Activated CD8-positive, alpha-beta T cell treated with anti-CD3 and anti-CD28 coated beads for 36 hours (primary cell): ENCODE measurements at regions of chr1 and their contacts with region 1.

Region 1: DNA sequence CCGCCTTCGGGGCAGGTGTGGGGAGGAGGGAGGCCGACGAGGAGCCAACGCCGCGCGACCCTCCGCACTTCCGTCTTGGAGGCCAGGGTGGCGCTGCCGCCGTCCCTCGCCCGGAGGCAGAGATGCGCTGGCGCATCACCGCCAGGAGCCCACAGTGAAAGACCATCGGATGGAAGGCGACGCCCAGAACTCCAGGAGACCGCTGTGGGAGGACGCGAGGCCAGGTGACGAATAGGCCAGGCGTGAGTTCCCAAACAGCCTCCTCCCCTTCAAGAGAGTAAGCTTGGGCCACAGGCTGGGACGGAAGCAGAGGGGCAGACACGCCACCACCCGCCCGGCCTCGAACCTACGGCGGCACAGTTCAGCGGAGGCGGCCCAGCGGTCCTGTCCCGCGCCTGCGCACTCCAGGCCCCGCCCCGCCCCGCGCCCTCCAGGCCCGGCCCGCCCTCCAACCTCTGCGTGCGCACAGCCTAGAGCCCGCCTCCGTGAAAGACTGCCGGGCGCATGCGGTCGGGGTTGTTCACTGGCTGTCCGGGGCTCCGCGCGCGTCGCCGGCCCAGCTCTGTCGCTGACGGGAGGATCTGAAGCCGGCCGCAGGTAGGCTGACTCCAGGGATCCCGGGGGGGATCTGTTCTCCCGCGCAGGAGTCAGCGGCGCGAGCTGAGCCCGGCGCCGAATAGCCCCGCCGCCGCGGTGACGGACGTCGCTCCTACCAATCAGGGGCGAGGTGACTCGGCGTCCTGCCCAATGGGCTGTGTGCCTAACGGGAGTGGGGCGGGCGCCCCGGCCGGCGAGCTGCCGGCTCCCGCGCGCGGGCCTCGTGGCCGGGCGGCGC is at the start of gene CTPS1:
- DNase-seq: peak; percentile 96
- ATAC-seq: peak; percentile 88
- H3K4me3 Mint-ChIP-seq: peak within 1 kb of the TSS; percentile 91
- H3K27ac Mint-ChIP-seq: peak within 1 kb of the TSS; percentile 95
- H3K4me1 Mint-ChIP-seq: peaks cover 47% of the 10 kb centered on the region
- H3K27me3 Mint-ChIP-seq: no peaks in the 10 kb centered on the region
- CTCF ChIP-seq: peak; percentile 50
- total RNA-seq, gene CTPS1: 100 to 102 TPM

Region 2: DNA sequence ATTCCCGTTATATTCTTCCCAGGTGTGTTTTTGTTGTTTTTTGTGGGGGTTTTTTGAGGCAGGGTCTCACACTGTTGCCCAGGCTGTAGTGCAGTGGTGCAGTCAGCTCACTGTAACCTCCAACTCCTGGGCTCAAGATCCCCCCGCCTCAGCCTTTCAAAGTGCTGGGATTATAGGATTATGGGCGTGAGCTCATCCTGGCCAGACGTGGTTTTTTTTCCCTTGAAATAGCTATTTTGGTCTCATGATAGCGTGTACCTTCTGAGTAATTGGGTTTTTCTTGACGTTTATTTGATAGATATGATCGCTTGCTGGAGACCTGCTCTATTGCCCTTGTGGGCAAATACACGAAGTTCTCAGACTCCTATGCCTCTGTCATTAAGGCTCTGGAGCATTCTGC is 17.6 kb after region 1 on chr1:
- CTCF ChIA-PET with region 1: interaction called, 8 read pairs
- POLR2A ChIA-PET with region 1: interaction called, 67 read pairs
- intact Hi-C with region 1: no loop called
- DNase-seq: no peak
- ATAC-seq: no peak
- H3K4me3 Mint-ChIP-seq: no peak overlapping the region
- H3K27ac Mint-ChIP-seq: no peak overlapping the region
- H3K4me1 Mint-ChIP-seq: peaks cover 8% of the 10 kb centered on the region
- H3K27me3 Mint-ChIP-seq: no peaks in the 10 kb centered on the region
- CTCF ChIP-seq: no peak

Region 3: DNA sequence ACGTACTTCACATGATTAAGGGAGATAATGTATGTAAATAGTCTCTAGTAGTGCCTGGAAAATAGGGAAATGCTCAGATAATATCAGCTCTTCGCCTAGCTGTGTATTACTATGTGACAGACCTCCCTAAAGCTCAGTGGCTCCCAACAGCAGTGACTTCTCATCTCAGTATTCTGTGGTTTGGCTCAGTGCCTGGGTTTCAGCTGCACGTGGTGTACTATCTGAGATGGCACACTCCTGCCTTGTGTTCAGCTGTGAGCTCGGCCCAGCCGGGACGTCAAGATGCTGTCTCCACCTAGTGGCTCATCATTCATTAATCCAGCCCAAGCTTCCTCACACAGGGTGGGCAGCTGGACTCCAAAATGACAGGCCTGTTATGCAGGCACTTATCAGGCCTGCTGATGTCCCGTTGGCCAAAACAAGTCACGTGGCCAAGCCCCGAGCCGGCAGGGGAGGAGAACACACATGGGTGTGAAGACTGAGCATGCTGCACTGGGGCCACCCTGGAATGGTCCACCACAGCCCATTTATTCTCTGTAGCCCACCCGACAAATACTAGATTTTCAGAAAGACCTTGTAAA is 24.3 kb after region 1 on chr1:
- CTCF ChIA-PET with region 1: interaction called, 12 read pairs
- POLR2A ChIA-PET with region 1: interaction called, 67 read pairs
- intact Hi-C with region 1: no loop called
- DNase-seq: peak; percentile 98
- ATAC-seq: peak; percentile 96
- H3K4me3 Mint-ChIP-seq: no peak overlapping the region
- H3K27ac Mint-ChIP-seq: peak overlapping the region; percentile 37
- H3K4me1 Mint-ChIP-seq: peaks cover 27% of the 10 kb centered on the region
- H3K27me3 Mint-ChIP-seq: no peaks in the 10 kb centered on the region
- CTCF ChIP-seq: peak; percentile 46

Region 4: DNA sequence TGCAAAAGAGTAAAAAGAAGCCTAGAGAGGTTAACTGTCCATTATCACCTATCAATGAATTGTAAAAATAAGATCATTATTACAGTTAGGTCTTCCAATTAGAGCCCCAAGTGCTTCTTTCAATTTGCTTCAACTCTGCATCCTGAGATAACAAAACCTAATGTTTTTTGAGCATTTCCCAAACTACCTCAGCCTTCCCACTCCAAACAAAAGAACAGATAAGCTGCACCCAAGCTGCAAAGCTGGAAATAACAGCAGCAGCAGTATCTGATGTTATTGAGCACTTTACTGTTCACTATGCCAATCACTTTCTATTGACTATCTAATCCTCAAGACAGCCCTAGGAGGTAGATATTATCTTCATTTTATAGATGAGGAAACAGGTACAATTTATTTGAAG is 139.2 kb after region 1 on chr1:
- CTCF ChIA-PET with region 1: no interaction called
- POLR2A ChIA-PET with region 1: no interaction called
- intact Hi-C with region 1: no loop called
- DNase-seq: no peak
- ATAC-seq: no peak
- H3K4me3 Mint-ChIP-seq: no peak overlapping the region
- H3K27ac Mint-ChIP-seq: no peak overlapping the region
- H3K4me1 Mint-ChIP-seq: no peaks in the 10 kb centered on the region
- H3K27me3 Mint-ChIP-seq: no peaks in the 10 kb centered on the region
- CTCF ChIP-seq: no peak

Region 5: GRCh38 chr1:41161846-41162245 is 182.4 kb after region 1 on chr1:
- CTCF ChIA-PET with region 1: no interaction called
- POLR2A ChIA-PET with region 1: no interaction called
- intact Hi-C with region 1: no loop called
- DNase-seq: no peak
- ATAC-seq: no peak
- H3K4me3 Mint-ChIP-seq: no peak overlapping the region
- H3K27ac Mint-ChIP-seq: no peak overlapping the region
- H3K4me1 Mint-ChIP-seq: no peaks in the 10 kb centered on the region
- H3K27me3 Mint-ChIP-seq: no peaks in the 10 kb centered on the region
- CTCF ChIP-seq: no peak